Activated B cell treated with CpG ODN at 0.5 μM for 24 hours (primary cell): ENCODE measurements at regions of chr5 and their contacts with region 1.

Region 1: GRCh38 chr5:76402886-76403765 is at the start of gene IQGAP2:
- DNase-seq: peak; percentile 82
- ATAC-seq: peak; percentile 75
- H3K4me3 Mint-ChIP-seq: peak within 1 kb of the TSS; percentile 95
- H3K27ac Mint-ChIP-seq: peak within 1 kb of the TSS; percentile 97
- H3K4me1 Mint-ChIP-seq: peaks cover 51% of the 10 kb centered on the region
- H3K27me3 Mint-ChIP-seq: peaks cover 3% of the 10 kb centered on the region
- CTCF ChIP-seq: no peak
- total RNA-seq, gene IQGAP2: 6.7 and 8.8 TPM in 2 replicates

Region 2: DNA sequence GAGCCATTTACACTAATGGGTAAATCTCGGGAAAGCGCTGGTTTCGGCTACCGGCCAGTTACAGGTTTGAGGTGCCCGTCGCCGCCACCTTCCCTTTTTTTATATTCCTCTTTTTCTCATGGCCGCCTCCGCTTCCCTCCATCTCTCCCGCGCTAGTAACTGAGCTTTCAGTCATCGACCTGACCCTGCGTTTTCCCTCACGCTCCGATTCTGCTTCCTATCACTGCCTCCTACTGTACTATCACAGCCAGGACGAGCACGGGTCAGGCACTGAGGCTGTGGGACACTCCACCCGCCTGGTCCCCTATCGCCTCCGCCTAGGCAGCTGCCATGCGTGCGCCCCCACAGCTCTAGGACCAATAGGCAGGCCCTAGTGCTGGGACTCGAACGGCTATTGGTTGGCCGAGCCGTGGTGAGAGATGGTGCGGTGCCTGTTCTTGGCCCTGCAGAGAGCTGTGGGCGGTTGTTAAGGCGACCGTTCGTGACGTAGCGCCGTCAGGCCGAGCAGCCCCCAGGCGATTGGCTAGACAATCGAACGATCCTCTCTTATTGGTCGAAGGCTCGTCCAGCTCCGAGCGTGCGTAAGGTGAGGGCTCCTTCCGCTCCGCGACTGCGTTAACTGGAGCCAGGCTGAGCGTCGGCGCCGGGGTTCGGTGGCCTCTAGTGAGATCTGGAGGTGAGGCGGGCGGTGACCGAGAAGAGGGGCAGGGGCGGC is 1066.3 kb before region 1 on chr5 and contains the start of gene HMGCR:
- CTCF ChIA-PET with region 1: no interaction called
- POLR2A ChIA-PET with region 1: no interaction called
- intact Hi-C with region 1: loop called (anchors 2 kb)
- DNase-seq: peak; percentile 89
- ATAC-seq: peak; percentile 95
- H3K4me3 Mint-ChIP-seq: no peak within 1 kb of the TSS
- H3K27ac Mint-ChIP-seq: no peak within 1 kb of the TSS
- H3K4me1 Mint-ChIP-seq: peaks cover 30% of the 10 kb centered on the region
- H3K27me3 Mint-ChIP-seq: no peaks in the 10 kb centered on the region
- CTCF ChIP-seq: no peak
- total RNA-seq, gene HMGCR: 105 and 131 TPM in 2 replicates

Region 3: DNA sequence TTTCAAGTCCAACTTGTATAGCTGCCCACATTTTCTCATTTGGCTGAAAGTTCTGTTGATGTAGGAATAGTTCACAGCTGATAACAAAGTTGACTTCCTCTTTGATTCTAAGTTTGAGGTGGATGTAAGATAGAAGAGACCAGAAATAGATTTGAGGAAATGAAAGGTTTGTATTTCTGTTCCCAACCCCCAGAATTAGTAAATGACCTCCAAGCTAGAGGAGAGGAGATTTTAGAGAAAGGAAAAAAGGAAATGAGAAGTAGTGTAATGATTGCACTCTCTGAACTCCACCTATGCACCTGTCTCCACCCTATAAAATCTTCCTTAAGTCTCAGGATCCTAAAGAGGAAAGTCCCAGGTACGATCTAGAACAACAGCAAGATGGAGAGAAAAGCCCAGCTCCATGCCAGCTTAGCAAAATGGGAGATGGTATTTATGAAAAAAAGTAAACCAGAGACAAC is 555.5 kb before region 1 on chr5:
- CTCF ChIA-PET with region 1: no interaction called
- POLR2A ChIA-PET with region 1: no interaction called
- intact Hi-C with region 1: loop called (anchors 5 kb)
- DNase-seq: no peak
- ATAC-seq: peak; percentile 89
- H3K4me3 Mint-ChIP-seq: peak overlapping the region; percentile 50
- H3K27ac Mint-ChIP-seq: peak overlapping the region; percentile 82
- H3K4me1 Mint-ChIP-seq: peaks cover 45% of the 10 kb centered on the region
- H3K27me3 Mint-ChIP-seq: no peaks in the 10 kb centered on the region
- CTCF ChIP-seq: no peak

Region 4: DNA sequence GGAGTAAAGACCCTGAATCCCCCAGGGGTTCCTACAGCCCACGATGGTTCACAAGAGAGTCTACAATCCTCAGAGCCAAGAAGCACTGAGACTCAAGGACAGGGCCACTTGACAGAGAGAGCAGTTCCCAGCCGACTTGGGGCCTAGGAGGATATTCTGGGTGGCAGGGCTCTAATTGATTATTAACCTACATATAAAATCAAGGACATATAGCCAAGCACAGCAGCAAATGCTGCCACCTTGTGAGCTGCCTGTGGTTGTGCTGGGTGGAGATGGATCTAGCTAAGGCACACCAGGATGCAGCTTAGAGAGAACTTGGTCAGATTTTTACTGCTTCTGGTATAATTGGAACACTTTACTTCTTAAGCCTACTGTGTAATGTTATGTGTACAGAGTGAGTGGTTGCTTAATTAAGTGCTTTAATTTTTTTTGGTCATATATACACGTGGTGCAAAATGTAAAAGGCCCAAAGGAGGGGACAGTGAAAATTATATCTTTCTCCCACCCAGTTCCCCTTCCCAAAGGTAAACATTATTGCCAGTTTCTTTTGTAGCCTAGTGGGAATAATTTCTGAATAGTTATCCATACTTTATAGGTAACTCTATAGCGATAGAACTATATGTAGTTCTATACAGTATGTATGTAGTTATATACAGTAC is 141.3 kb after region 1 on chr5:
- CTCF ChIA-PET with region 1: no interaction called
- POLR2A ChIA-PET with region 1: interaction called, 14 read pairs
- intact Hi-C with region 1: loop called (anchors 1 kb)
- DNase-seq: no peak
- ATAC-seq: no peak
- H3K4me3 Mint-ChIP-seq: no peak overlapping the region
- H3K27ac Mint-ChIP-seq: no peak overlapping the region
- H3K4me1 Mint-ChIP-seq: peaks cover 45% of the 10 kb centered on the region
- H3K27me3 Mint-ChIP-seq: peaks cover 2% of the 10 kb centered on the region
- CTCF ChIP-seq: no peak

Region 5: GRCh38 chr5:76641514-76642120 is 238.5 kb after region 1 on chr5:
- CTCF ChIA-PET with region 1: no interaction called
- POLR2A ChIA-PET with region 1: no interaction called
- intact Hi-C with region 1: loop called (anchors 1 kb)
- DNase-seq: no peak
- ATAC-seq: no peak
- H3K4me3 Mint-ChIP-seq: no peak overlapping the region
- H3K27ac Mint-ChIP-seq: no peak overlapping the region
- H3K4me1 Mint-ChIP-seq: peaks cover 14% of the 10 kb centered on the region
- H3K27me3 Mint-ChIP-seq: no peaks in the 10 kb centered on the region
- CTCF ChIP-seq: no peak

Region 6: DNA sequence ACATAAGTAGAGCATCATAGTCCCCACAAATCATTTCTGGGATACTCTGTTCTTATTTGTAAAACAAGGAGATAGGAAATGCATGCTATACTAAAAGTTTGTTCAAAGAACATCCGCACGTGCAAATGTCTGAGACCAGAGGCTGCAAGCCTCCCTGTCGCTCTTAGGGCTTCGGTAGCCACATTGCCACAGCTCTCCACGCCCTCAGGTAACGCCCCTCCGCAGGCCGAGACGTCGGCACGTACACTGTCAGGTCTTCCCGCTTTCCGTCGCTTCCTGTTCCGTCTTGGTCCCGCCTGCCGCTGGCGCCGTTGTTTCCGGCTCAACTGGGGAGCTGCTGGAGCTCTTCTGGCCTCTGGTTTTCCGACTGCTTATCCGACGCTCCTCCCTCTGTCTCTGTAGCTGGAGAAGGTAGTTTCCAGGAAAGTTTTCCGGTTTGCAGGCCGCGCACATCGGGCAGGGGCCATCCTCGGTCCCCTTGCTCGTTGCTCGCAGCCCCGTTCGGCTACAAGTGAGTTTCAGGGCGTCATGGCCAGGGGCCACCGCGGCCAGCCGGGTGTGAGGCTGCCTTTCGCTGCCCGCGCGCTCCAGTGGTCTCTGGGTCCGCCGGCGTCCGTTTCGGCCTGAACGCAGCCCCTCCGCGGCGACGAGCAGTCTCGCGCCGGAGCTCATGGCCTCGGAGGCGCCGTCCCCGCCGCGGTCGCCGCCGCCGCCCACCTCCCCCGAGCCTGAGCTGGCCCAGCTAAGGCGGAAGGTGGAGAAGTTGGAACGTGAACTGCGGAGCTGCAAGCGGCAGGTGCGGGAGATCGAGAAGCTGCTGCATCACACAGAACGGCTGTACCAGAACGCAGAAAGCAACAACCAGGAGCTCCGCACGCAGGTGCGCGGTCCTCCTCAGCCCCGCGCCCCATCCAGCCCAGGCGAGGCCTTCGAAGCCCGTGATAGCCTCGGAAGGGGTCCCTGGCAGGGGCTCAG is 627.3 kb after region 1 on chr5 and contains the start of gene AGGF1:
- CTCF ChIA-PET with region 1: no interaction called
- POLR2A ChIA-PET with region 1: no interaction called
- intact Hi-C with region 1: loop called (anchors 10 kb)
- DNase-seq: peak; percentile 79
- ATAC-seq: peak; percentile 99
- H3K4me3 Mint-ChIP-seq: peak within 1 kb of the TSS; percentile 99
- H3K27ac Mint-ChIP-seq: peak within 1 kb of the TSS; percentile 89
- H3K4me1 Mint-ChIP-seq: peaks cover 28% of the 10 kb centered on the region
- H3K27me3 Mint-ChIP-seq: peaks cover 8% of the 10 kb centered on the region
- CTCF ChIP-seq: no peak
- total RNA-seq, gene AGGF1: 22.2 and 26.5 TPM in 2 replicates